ENCODE measurements at regions of chr11 and their contacts with region 1.

Region 1: DNA sequence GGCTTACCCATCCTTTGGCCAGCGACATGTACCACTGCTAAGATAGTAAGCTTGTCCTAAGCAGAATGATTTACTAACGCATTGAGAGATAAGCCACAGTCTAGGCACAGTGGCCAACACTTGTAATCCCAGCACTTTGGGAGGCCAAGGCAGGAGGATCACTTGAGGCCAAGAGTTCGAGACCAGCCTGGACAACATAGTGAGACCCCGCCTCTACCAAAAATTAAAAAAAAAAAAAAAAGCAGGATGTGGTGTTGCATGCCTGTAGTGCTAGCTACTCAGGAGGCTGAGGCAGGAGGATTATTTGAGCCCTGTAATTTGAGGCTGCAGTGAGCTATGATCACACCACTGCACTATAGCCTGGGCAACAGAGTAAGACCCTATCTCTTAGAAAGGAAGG is 93.1 kb downstream of the HIPK3 start:
- DNase-seq: no peak
- ATAC-seq: no peak

Region 2: DNA sequence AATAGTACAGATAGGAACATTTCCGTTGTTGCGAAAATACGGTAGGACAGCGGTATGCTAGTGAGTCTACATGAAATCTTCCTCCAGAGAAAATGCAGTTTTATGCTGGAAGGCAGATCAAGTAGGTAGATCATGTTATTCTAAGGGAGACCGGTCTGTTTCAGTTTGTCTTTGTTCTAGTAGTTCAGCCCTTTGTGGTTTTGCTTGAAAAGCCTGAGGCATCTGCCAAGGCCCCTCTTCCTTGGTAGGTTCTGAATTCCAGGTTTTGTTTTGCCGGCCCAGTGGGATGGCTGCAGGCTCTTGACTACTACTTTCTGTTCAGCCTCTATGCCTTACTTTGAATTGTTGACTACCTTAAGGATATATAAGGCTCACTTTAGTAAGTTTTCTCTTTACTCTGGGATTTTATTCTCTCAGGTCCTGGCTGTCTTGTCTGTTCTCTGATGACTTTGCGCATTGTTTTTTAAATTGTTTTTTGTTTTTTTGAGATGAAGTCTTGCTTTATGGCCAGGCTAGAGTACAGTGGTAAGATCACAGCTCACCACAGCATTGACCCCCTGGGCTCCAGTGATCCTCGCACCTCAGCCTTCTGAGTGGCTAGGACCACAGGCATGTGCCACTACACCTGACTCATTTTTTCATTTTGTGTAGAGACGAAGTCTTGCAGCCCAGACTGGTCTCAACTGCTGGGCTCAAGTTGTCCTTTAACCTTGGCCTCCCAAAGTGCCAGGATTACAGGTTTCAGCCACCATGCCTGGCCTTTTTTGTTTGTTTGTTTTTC is 39.4 kb before region 1 on chr11:
- intact Hi-C with region 1: no loop called
- DNase-seq: no peak
- ATAC-seq: no peak

Region 3: GRCh38 chr11:33747979-33748378 is 397.7 kb after region 1 on chr11:
- intact Hi-C with region 1: loop called in 1 of 2 experiments (anchors 5 kb)
- DNase-seq: no peak
- ATAC-seq: no peak